ENCODE measurements at regions of chr3 and their contacts with region 1.

Region 1: DNA sequence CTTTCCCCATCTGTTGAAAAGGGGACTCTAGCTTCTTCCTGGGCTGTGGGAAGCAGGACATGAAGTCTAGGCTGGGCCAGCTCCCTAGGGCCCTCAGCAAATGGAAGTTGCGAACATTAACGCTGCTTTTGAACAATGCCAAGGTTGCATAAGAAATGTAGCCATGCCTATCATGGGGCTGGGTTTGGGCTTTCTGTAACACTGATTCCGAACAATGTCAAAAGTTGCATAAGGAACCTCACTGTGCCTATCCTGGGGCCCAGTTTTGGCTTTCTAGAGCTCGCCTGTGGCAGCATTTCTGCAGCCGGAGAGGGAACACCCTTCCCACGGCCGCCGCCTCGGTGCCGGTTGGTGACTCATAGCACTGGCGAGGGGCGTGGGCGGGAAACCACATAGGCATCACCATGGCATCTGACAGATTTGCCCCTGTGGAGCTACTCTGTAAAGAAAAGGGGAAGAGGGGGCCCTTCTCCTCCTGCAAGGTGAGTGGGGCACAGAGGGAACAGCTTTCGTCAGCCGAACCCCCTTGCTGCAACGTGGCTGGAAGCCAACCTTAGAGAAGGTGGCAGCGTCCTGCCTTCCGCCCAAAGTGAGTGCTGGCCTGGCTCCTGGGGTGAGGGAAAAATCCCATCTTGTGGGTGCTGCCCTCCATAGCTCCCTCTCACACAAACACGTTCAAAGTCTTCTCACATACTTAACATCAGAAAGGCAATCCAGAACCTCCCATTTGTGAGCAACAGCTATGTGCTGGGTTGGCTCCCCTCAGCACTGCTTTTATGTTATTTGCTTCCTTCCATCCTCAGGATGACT is 46.6 kb upstream of the ATP2B2 start:
- DNase-seq: peak; percentile 87
- H3K4me3 Mint-ChIP-seq: peak overlapping the region; percentile 68
- H3K27ac Mint-ChIP-seq: peak overlapping the region; percentile 87
- H3K4me1 Mint-ChIP-seq: peaks cover 35% of the 10 kb centered on the region
- H3K27me3 Mint-ChIP-seq: peaks cover 2% of the 10 kb centered on the region

Region 2: GRCh38 chr3:10366651-10367101 is 185.3 kb before region 1 on chr3:
- intact Hi-C with region 1: loop called (anchors 1 kb)
- DNase-seq: peak; percentile 74
- H3K4me3 Mint-ChIP-seq: peak overlapping the region; percentile 1
- H3K27ac Mint-ChIP-seq: peak overlapping the region; percentile 39
- H3K4me1 Mint-ChIP-seq: peaks cover 19% of the 10 kb centered on the region
- H3K27me3 Mint-ChIP-seq: peaks cover 8% of the 10 kb centered on the region

Region 3: GRCh38 chr3:10437272-10437994 is 114.6 kb before region 1 on chr3:
- intact Hi-C with region 1: loop called (anchors 1 kb)
- DNase-seq: peak; percentile 87
- H3K4me3 Mint-ChIP-seq: peak overlapping the region; percentile 11
- H3K27ac Mint-ChIP-seq: peak overlapping the region; percentile 83
- H3K4me1 Mint-ChIP-seq: peaks cover 31% of the 10 kb centered on the region
- H3K27me3 Mint-ChIP-seq: no peaks in the 10 kb centered on the region

Region 4: GRCh38 chr3:10602769-10603768 is 51.0 kb after region 1 on chr3:
- intact Hi-C with region 1: loop called (anchors 1 kb)
- DNase-seq: peak; percentile 90
- H3K4me3 Mint-ChIP-seq: peak overlapping the region; percentile 69
- H3K27ac Mint-ChIP-seq: peak overlapping the region; percentile 62
- H3K4me1 Mint-ChIP-seq: peaks cover 24% of the 10 kb centered on the region
- H3K27me3 Mint-ChIP-seq: peaks cover 37% of the 10 kb centered on the region

Region 5: DNA sequence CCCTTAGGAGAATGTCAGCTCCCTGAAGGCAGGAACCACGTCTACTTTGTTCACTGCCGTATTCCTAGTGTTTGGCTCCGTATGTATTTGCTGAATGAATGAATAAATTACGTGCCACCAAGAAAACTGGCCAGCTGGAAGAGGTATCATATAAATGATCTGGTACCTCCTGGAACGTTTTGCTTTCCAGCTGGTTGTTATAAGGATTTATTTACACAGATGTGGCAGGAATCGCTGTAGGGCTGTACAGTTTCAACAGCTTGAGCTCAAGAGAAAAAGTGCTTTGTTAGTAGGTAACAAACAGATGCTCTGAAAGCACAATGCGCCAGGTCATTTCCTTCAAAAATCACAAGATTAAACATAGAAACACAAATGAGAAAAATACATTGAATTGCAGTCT is 62.1 kb after region 1 on chr3:
- intact Hi-C with region 1: no loop called
- DNase-seq: no peak
- H3K4me3 Mint-ChIP-seq: no peak overlapping the region
- H3K27ac Mint-ChIP-seq: no peak overlapping the region
- H3K4me1 Mint-ChIP-seq: no peaks in the 10 kb centered on the region
- H3K27me3 Mint-ChIP-seq: peaks cover 13% of the 10 kb centered on the region

Region 6: DNA sequence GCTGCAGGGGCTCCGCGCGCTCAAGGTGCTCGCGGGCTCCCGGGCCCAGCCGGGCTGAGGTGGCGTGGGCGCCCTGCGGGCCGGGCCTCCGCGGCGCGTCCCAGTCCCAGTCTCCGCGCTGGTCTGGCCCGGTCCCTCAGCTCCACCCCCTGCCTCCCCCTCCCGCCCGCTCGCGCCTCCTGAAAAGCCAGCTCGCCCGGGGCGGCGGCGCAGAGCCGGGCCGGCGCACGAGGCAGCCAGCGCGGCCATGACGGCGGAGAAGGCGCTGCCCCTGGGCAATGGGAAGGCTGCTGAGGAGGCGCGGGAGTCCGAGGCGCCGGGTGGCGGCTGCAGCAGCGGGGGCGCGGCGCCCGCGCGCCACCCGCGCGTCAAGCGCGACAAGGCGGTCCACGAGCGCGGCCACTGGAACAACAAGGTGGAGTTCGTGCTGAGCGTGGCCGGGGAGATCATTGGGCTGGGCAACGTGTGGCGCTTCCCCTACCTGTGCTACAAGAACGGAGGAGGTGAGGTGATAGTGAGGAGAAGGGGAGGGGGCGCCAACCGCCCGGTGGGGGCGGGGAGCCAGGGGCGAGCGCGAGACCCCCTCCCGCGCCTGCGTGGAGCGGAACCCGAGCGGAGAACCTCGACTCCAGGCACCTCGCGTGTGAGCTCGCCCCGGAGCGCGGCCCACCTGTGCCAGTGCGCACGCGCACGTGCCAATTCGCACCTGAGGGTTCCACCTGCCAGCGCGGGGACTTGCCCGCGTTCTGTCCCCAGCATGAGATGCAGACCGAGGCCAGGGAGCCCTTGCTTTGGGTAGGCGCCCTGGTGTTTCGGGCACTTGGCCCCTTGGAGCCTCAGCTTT is 264.2 kb after region 1 on chr3 and contains the start of gene SLC6A11:
- intact Hi-C with region 1: no loop called
- DNase-seq: no peak
- H3K4me3 Mint-ChIP-seq: no peak within 1 kb of the TSS
- H3K27ac Mint-ChIP-seq: no peak within 1 kb of the TSS
- H3K4me1 Mint-ChIP-seq: no peaks in the 10 kb centered on the region
- H3K27me3 Mint-ChIP-seq: peaks cover 39% of the 10 kb centered on the region
- total RNA-seq, gene SLC6A11: not detected in 2 replicates